H1 (cell line): ENCODE measurements at regions of chr18 and their contacts with region 1.

Region 1: GRCh38 chr18:7723543-7723942 is 156.4 kb downstream of the PTPRM start:
- DNase-seq: no peak
- H3K4me3 ChIP-seq: no peak overlapping the region
- H3K27ac ChIP-seq: no peak overlapping the region
- H3K4me1 ChIP-seq: peaks cover 0 to 12% (median 5%) of the 10 kb centered on the region in 4 experiments; a peak in 6 of 7 replicates
- H3K27me3 ChIP-seq: no peaks in the 10 kb centered on the region
- CTCF ChIP-seq: peak in 2 of 3 experiments; percentile 9 to 30; a peak in 3 of 4 replicates
- EP300 ChIP-seq: no peak
- POLR2A ChIP-seq: no peak
- RAD21 ChIP-seq: peak in 1 of 2 experiments; percentile 31; a peak in 2 of 4 replicates

Region 2: DNA sequence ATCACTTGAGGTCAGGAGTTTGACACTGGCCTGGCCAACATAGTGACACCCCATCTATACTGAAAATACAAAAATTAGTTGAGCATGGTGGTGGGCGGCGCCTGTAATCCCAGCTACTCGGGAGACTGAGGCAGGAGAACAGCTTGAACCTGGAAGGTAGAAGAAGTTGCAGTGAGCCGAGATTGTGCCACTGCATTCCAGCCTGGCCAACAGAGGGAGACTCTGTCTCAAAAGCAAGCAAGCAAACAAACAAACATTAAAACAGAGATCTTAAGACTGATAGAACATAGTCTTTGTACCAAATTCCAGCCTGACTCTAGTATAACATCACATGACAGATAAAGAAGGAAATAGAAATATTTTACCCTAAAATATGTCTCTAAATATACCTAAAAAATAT is 11.7 kb after region 1 on chr18:
- CTCF ChIA-PET with region 1: interaction called, 11 read pairs
- POLR2A ChIA-PET with region 1: no interaction called
- DNase-seq: no peak
- H3K4me3 ChIP-seq: no peak overlapping the region
- H3K27ac ChIP-seq: no peak overlapping the region
- H3K4me1 ChIP-seq: peaks cover 0 to 5% (median 3%) of the 10 kb centered on the region in 4 experiments; a peak in 3 of 7 replicates
- H3K27me3 ChIP-seq: no peaks in the 10 kb centered on the region
- CTCF ChIP-seq: peak in 2 of 3 experiments; percentile 32 to 36; a peak in 2 of 4 replicates
- EP300 ChIP-seq: no peak
- POLR2A ChIP-seq: no peak
- RAD21 ChIP-seq: peak; percentile 14 to 29; a peak in 2 of 4 replicates

Region 3: GRCh38 chr18:8208716-8209115 is 485.2 kb after region 1 on chr18:
- CTCF ChIA-PET with region 1: no interaction called
- POLR2A ChIA-PET with region 1: no interaction called
- DNase-seq: no peak
- H3K4me3 ChIP-seq: no peak overlapping the region
- H3K27ac ChIP-seq: no peak overlapping the region
- H3K4me1 ChIP-seq: no peaks in the 10 kb centered on the region
- H3K27me3 ChIP-seq: no peaks in the 10 kb centered on the region
- CTCF ChIP-seq: peak in 1 of 3 experiments; percentile 20; a peak in 1 of 4 replicates
- EP300 ChIP-seq: no peak
- POLR2A ChIP-seq: no peak
- RAD21 ChIP-seq: 0 out of 4 replicates have a peak, but pooled peaks of 1 of the 2 experiments have one; percentile 1